H1 (cell line): ENCODE measurements at regions of chr2 and their contacts with region 1.

Region 1: DNA sequence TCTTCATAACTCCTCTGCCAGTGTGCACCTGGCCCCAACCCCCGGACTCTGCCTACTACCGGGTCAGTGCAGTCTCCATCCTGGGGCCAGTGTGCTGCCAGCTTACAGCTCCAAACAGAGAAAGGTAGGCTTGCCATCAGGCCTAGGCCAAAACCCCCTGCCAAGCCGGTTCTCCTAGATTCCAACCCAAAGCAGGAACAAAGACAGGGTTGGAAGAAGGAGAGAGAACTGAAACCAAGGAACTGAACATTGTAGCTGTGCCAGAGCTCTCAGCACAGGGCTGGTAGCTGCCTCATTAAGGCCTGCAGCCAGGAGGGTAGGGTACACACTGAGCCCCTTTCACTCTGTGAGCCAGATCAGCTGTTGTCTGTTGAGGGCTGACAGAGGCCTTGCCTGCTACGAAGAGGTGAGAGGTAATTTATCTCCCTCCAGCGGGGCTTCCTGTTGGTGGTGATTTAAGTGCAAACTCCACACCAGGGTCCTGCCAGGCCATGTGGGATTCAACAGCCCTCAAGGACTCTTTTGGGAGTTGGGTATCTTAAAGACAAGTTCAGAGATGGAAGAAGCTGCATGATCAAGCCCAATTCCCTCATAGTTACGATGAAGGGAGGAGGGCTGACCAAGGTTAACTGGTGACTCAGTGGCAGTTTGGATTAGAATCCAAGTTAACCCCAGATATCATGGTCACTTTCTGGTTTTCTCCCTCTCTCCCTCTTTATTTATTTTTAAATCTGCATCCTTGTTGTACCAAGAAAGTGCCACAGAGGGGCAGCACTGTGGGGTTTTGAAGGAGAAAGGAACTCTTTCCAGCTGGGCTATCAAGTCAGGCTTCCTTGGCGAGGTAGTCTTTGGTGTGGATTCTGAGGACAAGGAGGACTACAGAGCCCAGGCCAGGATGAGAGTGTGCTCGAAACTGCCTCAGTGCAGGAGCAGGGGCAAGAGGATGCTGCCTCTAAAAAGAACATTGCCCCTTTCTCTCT is 48.1 kb downstream of the CYRIA start:
- DNase-seq: peak in 1 of 2 experiments; percentile 66
- H3K4me3 ChIP-seq: no peak overlapping the region
- H3K27ac ChIP-seq: no peak overlapping the region
- H3K4me1 ChIP-seq: peaks cover 0 to 2% (median 0%) of the 10 kb centered on the region in 4 experiments; a peak in 2 of 7 replicates
- H3K27me3 ChIP-seq: no peaks in the 10 kb centered on the region
- CTCF ChIP-seq: peak in 2 of 3 experiments; percentile 64 to 73; a peak in 3 of 4 replicates
- EP300 ChIP-seq: no peak
- POLR2A ChIP-seq: no peak
- RAD21 ChIP-seq: peak; percentile 74 to 81

Region 2: DNA sequence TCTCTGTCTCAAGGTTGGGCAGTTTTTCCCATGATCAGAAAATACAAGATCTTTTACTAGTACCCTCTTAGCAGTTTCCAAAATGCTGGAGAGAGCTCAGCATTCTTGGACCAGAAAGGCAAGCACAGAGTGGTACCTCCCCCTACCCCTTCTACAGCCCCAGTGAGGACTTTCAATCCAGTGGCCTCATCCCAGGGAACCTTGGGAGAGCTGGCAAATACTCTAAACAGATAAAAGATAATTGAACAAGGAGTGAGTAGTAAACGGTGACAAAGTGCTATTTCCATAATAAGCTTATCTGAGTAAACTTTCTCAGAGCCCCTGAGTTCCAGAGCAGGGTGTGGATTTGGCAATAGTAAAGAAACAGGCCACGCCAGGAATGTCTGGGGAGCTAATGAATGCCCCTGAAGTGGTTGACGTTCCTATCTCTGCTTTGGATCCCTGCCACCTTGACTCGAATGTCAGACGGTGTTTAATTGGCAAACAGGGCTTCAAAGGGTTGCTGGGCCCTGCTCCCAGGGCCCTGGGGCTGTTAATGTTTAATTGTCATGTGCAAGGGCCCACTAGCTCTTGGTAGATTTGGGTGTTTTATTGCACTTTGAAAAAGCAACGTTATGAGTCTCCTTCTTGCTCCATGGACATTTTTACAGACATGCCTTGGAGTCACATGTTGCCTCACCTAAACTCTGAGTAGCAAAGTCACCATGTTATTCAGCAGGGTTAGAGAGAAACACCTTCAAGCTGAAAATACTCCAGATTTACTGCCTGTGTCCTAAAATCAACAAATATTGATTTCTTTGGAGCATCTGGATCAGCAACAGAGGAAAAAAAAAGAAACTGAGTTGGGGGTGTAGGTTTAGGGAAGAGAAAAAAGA is 191.9 kb before region 1 on chr2:
- CTCF ChIA-PET with region 1: no interaction called
- POLR2A ChIA-PET with region 1: no interaction called
- DNase-seq: no peak
- H3K4me3 ChIP-seq: no peak overlapping the region
- H3K27ac ChIP-seq: no peak overlapping the region
- H3K4me1 ChIP-seq: no peaks in the 10 kb centered on the region
- H3K27me3 ChIP-seq: no peaks in the 10 kb centered on the region
- CTCF ChIP-seq: no peak
- EP300 ChIP-seq: no peak
- POLR2A ChIP-seq: no peak
- RAD21 ChIP-seq: no peak

Region 3: DNA sequence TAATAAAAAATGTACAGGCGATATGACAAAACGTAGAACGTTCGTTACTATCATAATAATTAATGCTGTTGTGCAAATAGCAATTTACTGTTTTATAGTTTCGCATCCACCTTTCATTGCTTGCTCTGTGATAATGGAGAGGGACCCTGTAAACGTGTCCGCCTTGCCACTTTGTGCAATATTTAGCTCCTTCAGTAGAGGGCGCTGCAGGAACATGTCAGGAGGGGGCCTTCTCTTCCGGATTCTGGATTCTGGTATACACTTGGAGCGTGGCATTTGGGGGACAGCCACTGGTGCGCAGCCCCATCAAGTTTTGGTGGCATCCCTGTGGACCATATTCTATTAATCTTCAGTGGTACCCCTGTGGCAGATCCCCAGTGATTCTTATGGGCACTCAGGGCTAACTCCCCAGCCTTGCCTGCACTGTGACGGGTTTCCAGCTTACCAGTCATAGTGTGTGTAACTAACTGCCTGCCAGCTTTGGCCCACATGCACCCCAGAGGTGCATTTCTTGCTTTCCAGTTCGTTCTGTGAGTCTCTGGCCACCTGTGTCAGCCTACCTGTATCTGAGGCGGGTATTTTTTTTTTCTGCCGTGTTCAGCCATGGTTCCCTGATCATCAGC is 92.2 kb before region 1 on chr2:
- CTCF ChIA-PET with region 1: interaction called, 22 read pairs
- POLR2A ChIA-PET with region 1: no interaction called
- DNase-seq: peak in 1 of 2 experiments; percentile 89
- H3K4me3 ChIP-seq: no peak overlapping the region
- H3K27ac ChIP-seq: no peak overlapping the region
- H3K4me1 ChIP-seq: peaks cover 0 to 4% (median 0%) of the 10 kb centered on the region in 4 experiments; a peak in 2 of 7 replicates
- H3K27me3 ChIP-seq: no peaks in the 10 kb centered on the region
- CTCF ChIP-seq: peak; percentile 73 to 87 (median 86)
- EP300 ChIP-seq: no peak
- POLR2A ChIP-seq: no peak
- RAD21 ChIP-seq: peak; percentile 89 to 91

Region 4: DNA sequence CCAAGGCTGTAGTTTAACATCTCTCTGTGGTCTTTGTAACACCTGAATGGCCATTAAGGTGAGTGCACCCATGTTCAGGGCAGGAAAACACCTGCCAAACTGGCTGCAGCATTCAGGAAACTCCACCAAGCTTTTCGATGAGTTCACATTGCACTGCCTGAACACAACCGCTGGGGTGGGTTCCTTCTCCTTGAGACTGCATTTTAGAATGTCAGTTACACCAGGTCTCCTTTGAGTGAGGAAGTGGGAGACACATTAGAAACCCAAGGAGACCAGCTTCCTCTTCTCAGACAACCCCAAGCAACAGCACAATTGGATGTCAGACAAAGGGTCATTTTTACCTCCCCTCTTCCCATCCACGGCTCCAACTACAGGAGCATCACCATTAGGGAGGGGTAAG is 12.9 kb after region 1 on chr2:
- CTCF ChIA-PET with region 1: interaction called, 50 read pairs
- POLR2A ChIA-PET with region 1: interaction called, 3 read pairs
- DNase-seq: no peak
- H3K4me3 ChIP-seq: no peak overlapping the region
- H3K27ac ChIP-seq: no peak overlapping the region
- H3K4me1 ChIP-seq: peaks cover 0 to 3% (median under 1%) of the 10 kb centered on the region in 4 experiments; a peak in 4 of 7 replicates
- H3K27me3 ChIP-seq: no peaks in the 10 kb centered on the region
- CTCF ChIP-seq: no peak
- EP300 ChIP-seq: no peak
- POLR2A ChIP-seq: no peak
- RAD21 ChIP-seq: no peak

Region 5: DNA sequence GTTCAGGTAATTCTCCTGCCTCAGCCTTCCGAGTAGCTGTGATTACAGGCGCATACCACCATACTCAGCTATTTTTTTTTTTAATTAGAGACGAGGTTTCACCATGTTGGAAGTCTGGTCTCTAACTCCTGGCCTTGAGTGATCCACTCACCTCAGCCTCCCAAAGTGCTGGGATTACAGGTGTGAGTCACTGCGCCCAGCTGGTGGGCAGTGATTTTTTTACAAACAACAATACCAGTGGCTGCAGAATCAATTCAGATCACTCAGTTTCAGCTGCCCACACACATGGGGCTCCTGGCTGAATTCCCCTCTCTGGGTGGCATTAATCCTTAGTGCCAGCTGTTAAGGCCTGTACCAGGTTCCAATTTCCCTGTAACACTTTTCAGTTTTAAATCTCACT is 61.4 kb after region 1 on chr2:
- CTCF ChIA-PET with region 1: interaction called, 14 read pairs
- POLR2A ChIA-PET with region 1: no interaction called
- DNase-seq: no peak
- H3K4me3 ChIP-seq: no peak overlapping the region
- H3K27ac ChIP-seq: no peak overlapping the region
- H3K4me1 ChIP-seq: no peaks in the 10 kb centered on the region
- H3K27me3 ChIP-seq: no peaks in the 10 kb centered on the region; a peak in 1 of 7 replicates
- CTCF ChIP-seq: no peak
- EP300 ChIP-seq: no peak
- POLR2A ChIP-seq: no peak
- RAD21 ChIP-seq: no peak

Region 6: DNA sequence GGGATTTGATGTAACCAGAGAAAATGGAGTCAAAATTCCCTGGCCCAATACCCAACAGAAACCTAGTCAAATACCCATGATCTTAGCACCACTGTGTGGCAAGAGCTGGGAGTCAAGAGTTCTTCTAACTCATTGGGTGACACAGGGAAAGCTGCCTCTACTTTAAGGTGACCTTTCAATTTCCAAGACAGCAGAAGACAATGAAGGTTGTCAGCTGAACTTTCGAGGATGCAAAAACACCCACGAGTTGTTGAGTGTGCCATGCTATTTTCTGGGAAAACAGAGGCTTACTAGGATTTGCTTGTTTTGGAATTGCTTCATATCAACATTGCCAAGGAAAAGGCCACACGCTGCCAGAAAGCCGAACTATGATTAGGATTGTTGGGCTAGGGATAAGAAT is 109.7 kb after region 1 on chr2:
- CTCF ChIA-PET with region 1: interaction called, 28 read pairs
- POLR2A ChIA-PET with region 1: no interaction called
- DNase-seq: no peak
- H3K4me3 ChIP-seq: no peak overlapping the region
- H3K27ac ChIP-seq: no peak overlapping the region
- H3K4me1 ChIP-seq: peaks cover 0 to 3% (median 0%) of the 10 kb centered on the region in 4 experiments; a peak in 1 of 7 replicates
- H3K27me3 ChIP-seq: no peaks in the 10 kb centered on the region
- CTCF ChIP-seq: no peak; a peak in 1 of 4 replicates
- EP300 ChIP-seq: no peak
- POLR2A ChIP-seq: no peak
- RAD21 ChIP-seq: peak; percentile 30 to 46

Region 7: DNA sequence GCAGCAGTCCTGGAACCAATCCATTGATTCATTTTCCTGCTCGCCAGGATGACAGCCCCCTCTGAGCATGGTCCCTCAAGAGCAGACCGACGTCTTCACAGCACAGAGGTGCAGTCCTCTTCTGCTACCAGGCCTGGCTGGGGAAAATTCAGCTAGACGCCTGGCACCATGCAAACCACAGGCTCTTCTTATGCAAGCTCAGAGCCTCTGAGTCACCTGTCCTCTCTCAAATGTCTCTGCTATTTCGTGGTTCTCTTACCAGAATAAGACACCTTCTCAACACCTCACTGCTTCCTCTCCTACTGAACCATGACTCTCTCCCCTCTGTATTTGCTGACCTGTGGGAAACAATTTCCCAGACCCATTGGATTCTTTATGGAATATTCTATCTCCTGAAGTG is 127.9 kb after region 1 on chr2:
- CTCF ChIA-PET with region 1: interaction called, 14 read pairs
- POLR2A ChIA-PET with region 1: no interaction called
- DNase-seq: no peak
- H3K4me3 ChIP-seq: no peak overlapping the region
- H3K27ac ChIP-seq: no peak overlapping the region
- H3K4me1 ChIP-seq: no peaks in the 10 kb centered on the region
- H3K27me3 ChIP-seq: peaks cover 0 to 1% (median 0%) of the 10 kb centered on the region in 4 experiments; a peak in 1 of 7 replicates
- CTCF ChIP-seq: no peak
- EP300 ChIP-seq: no peak
- POLR2A ChIP-seq: no peak
- RAD21 ChIP-seq: no peak

Region 8: DNA sequence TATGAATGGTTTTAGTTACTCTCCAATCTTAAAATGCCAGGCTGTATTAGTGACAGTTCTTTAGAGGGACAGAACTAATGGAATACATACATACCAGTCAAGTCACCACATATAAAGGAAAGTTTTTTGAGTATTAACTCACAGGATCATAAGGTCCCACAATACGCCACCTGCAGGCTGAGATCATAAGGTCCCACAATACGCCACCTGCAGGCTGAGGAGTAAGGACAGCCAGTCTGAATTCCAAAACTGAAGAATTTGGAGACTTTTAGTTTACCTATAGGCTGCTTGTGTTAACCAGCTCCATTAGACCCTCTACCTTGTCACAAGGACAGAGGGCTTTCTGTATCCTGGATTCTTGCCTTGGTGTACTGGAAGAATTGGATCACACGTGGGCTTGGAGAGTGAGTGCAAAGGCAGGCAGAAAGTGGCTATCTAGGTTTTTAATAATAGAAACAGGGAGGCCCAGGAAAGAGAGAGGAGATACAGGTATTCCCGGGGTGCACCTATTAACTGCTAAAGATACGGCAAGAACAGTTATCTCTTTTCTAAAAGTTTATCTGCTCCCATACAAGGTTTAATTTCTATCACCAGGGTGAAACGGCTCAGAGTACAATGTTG is 282.9 kb after region 1 on chr2:
- CTCF ChIA-PET with region 1: no interaction called
- POLR2A ChIA-PET with region 1: no interaction called
- DNase-seq: peak; percentile 29 to 63
- H3K4me3 ChIP-seq: no peak overlapping the region
- H3K27ac ChIP-seq: no peak overlapping the region
- H3K4me1 ChIP-seq: no peaks in the 10 kb centered on the region
- H3K27me3 ChIP-seq: no peaks in the 10 kb centered on the region
- CTCF ChIP-seq: peak; percentile 69 to 100 (median 94)
- EP300 ChIP-seq: no peak
- POLR2A ChIP-seq: no peak
- RAD21 ChIP-seq: peak; percentile 70 to 78

Region 9: GRCh38 chr2:17035010-17035409 is 417.4 kb after region 1 on chr2:
- CTCF ChIA-PET with region 1: no interaction called
- POLR2A ChIA-PET with region 1: no interaction called
- DNase-seq: no peak
- H3K4me3 ChIP-seq: no peak overlapping the region
- H3K27ac ChIP-seq: no peak overlapping the region
- H3K4me1 ChIP-seq: no peaks in the 10 kb centered on the region
- H3K27me3 ChIP-seq: no peaks in the 10 kb centered on the region
- CTCF ChIP-seq: no peak
- EP300 ChIP-seq: no peak
- POLR2A ChIP-seq: no peak
- RAD21 ChIP-seq: no peak